Mammary epithelial cell (primary cell): ENCODE measurements at regions of chr3 and their contacts with region 1.

Region 1: GRCh38 chr3:24299806-24300626 is 194.6 kb downstream of the THRB start:
- DNase-seq: peak; percentile 88
- H3K4me3 ChIP-seq: no peak overlapping the region
- H3K27ac ChIP-seq: peak overlapping the region; percentile 62
- H3K4me1 ChIP-seq: peaks cover 26% of the 10 kb centered on the region
- H3K27me3 ChIP-seq: no peaks in the 10 kb centered on the region
- CTCF ChIP-seq: no peak

Region 2: GRCh38 chr3:24318668-24319287 is 18.8 kb after region 1 on chr3:
- CTCF ChIA-PET with region 1: no interaction called
- dilution Hi-C with region 1: no loop called
- in situ Hi-C with region 1: no loop called
- intact Hi-C with region 1: loop called (anchors 2 kb)
- DNase-seq: peak; percentile 82
- H3K4me3 ChIP-seq: no peak overlapping the region
- H3K27ac ChIP-seq: peak overlapping the region; percentile 66
- H3K4me1 ChIP-seq: peaks cover 23% of the 10 kb centered on the region
- H3K27me3 ChIP-seq: no peaks in the 10 kb centered on the region
- CTCF ChIP-seq: no peak

Region 3: GRCh38 chr3:24843955-24844354 is 543.9 kb after region 1 on chr3:
- CTCF ChIA-PET with region 1: no interaction called
- dilution Hi-C with region 1: no loop called
- in situ Hi-C with region 1: no loop called
- intact Hi-C with region 1: no loop called
- DNase-seq: no peak
- H3K4me3 ChIP-seq: no peak overlapping the region
- H3K27ac ChIP-seq: no peak overlapping the region
- H3K4me1 ChIP-seq: no peaks in the 10 kb centered on the region
- H3K27me3 ChIP-seq: no peaks in the 10 kb centered on the region
- CTCF ChIP-seq: no peak